ENCODE measurements at regions of chr17 and their contacts with region 1.

Region 1: GRCh38 chr17:75109407-75110233 is at the start of gene ARMC7:
- DNase-seq: peak; percentile 72
- ATAC-seq: peak; percentile 76
- H3K4me3 ChIP-seq: peak within 1 kb of the TSS; percentile 81 to 91
- H3K27ac ChIP-seq: peak within 1 kb of the TSS; percentile 72
- H3K4me1 ChIP-seq: peaks cover 19 to 51% of the 10 kb centered on the region in 2 experiments
- H3K27me3 ChIP-seq: no peaks in the 10 kb centered on the region
- CTCF ChIP-seq: no peak
- POLR2A ChIP-seq: peak; percentile 87
- RAD21 ChIP-seq: peak; percentile 39
- total RNA-seq, gene ARMC7: 43.2 TPM

Region 2: DNA sequence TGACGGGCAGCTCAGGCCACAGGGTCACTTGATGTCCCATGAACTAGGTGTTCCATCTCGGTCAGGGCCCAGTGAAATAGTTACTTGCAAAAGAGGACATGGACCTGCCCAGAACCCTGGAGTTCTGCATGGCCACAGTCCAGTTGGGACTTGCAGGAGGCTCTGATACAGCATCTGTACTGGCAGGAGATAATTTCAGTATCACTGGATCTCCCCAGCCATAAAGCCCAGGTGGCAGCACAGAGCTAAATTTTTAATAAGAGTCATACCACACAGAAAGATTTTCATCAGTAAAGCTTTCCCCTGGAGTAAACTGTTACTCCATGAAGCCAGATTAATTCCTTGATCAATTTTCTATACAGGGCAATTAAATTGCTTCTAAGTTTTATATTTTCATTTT is 39.8 kb before region 1 on chr17:
- CTCF ChIA-PET with region 1: interaction called, 14 read pairs
- POLR2A ChIA-PET with region 1: interaction called, 5 read pairs
- RAD21 ChIA-PET with region 1: interaction called, 3 to 7 read pairs
- intact Hi-C with region 1: loop called (anchors 5 kb)
- DNase-seq: no peak
- ATAC-seq: peak; percentile 76
- H3K4me3 ChIP-seq: no peak overlapping the region
- H3K27ac ChIP-seq: no peak overlapping the region
- H3K4me1 ChIP-seq: peaks cover 14% of the 10 kb centered on the region in 2 experiments
- H3K27me3 ChIP-seq: no peaks in the 10 kb centered on the region
- CTCF ChIP-seq: peak; percentile 55 to 87 (median 57)
- POLR2A ChIP-seq: no peak
- RAD21 ChIP-seq: peak; percentile 90

Region 3: GRCh38 chr17:75124041-75124818 is 14.6 kb after region 1 on chr17:
- CTCF ChIA-PET with region 1: interaction called, 75 read pairs
- POLR2A ChIA-PET with region 1: interaction called, 44 read pairs
- RAD21 ChIA-PET with region 1: interaction called, 6 to 10 read pairs
- intact Hi-C with region 1: no loop called
- DNase-seq: peak; percentile 99
- ATAC-seq: peak; percentile 90
- H3K4me3 ChIP-seq: peak overlapping the region; percentile 44 to 55
- H3K27ac ChIP-seq: peak overlapping the region; percentile 93
- H3K4me1 ChIP-seq: peaks cover 40 to 71% of the 10 kb centered on the region in 2 experiments
- H3K27me3 ChIP-seq: no peaks in the 10 kb centered on the region
- CTCF ChIP-seq: 0 out of 6 replicates have a peak, but pooled peaks of 1 of the 3 experiments have one; percentile 3
- POLR2A ChIP-seq: peak; percentile 77
- RAD21 ChIP-seq: no peak

Region 4: DNA sequence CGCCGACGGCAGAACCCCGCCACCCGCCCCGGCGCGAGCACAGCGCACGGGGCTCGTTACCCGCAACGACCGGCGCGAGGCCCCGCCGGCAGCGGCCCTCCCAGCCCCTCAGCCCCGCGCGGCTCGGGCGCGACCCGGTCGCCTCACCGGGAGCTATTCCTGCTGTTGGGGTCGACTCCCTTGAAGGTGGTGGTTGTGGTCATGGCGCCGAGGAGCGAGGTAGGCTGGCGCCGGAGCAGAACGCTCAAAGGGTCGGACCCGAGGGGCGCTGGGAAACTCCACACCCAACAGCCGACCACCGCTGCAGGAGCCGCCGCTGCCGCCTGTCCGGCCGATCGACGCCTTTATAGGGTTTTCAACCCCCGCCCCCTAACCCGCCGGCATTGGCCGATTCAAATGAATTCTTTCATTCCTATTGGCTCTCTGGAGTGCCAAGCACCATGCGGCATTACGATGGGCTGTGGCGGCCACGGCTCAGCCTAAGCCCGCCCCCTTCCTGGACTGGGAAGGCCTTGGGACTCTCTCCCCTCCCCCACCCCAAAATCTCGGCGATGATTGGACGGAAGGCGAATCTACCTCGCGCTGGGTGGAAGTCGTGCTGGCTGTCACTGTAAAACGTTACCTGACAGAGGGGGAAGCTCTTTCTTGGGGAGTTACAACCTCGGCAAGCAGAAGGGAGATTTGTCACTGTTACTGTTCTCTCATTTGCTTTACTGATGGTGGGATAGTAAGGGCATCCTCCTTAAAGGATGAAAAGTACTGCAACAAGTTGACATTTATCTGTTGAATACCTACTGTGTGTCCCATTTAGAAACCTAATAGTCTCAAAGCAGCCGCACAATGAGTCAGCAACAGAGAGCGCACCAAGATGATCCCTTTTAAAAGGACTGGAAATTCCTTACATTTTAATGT is 44.8 kb after region 1 on chr17 and contains the start of gene JPT1:
- CTCF ChIA-PET with region 1: interaction called, 5 read pairs
- POLR2A ChIA-PET with region 1: interaction called, 10 read pairs
- RAD21 ChIA-PET with region 1: no interaction called
- intact Hi-C with region 1: no loop called
- DNase-seq: peak; percentile 100
- ATAC-seq: peak; percentile 94
- H3K4me3 ChIP-seq: peak within 1 kb of the TSS; percentile 88 to 96
- H3K27ac ChIP-seq: peak within 1 kb of the TSS; percentile 94
- H3K4me1 ChIP-seq: peaks cover 61 to 64% of the 10 kb centered on the region in 2 experiments
- H3K27me3 ChIP-seq: no peaks in the 10 kb centered on the region
- CTCF ChIP-seq: no peak
- POLR2A ChIP-seq: peak; percentile 100
- RAD21 ChIP-seq: no peak
- total RNA-seq, gene JPT1: 575 TPM

Region 5: GRCh38 chr17:75199886-75200618 is 90.4 kb after region 1 on chr17:
- CTCF ChIA-PET with region 1: interaction called, 104 read pairs
- POLR2A ChIA-PET with region 1: interaction called, 8 read pairs
- RAD21 ChIA-PET with region 1: interaction called, 6 to 22 read pairs
- intact Hi-C with region 1: loop called (anchors 1 kb)
- DNase-seq: no peak
- ATAC-seq: no peak
- H3K4me3 ChIP-seq: no peak overlapping the region
- H3K27ac ChIP-seq: peak overlapping the region; percentile 62
- H3K4me1 ChIP-seq: peaks cover 20 to 37% of the 10 kb centered on the region in 2 experiments
- H3K27me3 ChIP-seq: no peaks in the 10 kb centered on the region
- CTCF ChIP-seq: no peak
- POLR2A ChIP-seq: no peak
- RAD21 ChIP-seq: no peak

Region 6: DNA sequence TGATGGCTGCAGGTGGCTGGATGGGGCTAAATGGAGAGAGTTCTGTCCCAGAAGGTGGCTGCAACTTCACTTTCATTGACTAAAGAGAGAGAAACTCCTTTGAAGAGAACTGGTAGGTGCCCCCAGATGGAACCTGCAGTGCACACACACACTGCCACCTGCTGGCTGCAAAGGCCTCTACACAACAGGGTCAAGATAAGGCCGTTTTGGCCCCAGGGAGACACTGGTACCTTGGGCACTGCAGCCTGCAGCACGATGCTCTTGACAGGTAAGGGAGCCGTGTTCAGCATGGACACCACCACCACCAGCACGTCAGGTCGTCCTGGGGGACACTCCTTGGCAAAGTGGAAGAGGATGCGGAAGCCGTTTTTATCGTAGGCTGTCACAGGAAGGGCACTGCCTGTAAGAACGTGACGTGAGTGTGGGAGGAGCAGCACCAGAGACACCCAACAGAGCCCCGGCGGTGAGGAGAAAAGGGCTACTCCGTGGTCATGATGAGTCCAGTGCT is 129.1 kb after region 1 on chr17:
- CTCF ChIA-PET with region 1: interaction called, 30 read pairs
- POLR2A ChIA-PET with region 1: interaction called, 6 read pairs
- RAD21 ChIA-PET with region 1: no interaction called
- intact Hi-C with region 1: loop called (anchors 1 kb)
- DNase-seq: peak; percentile 59
- ATAC-seq: peak; percentile 79
- H3K4me3 ChIP-seq: no peak overlapping the region
- H3K27ac ChIP-seq: no peak overlapping the region; the same call in 1 of the 2 replicates
- H3K4me1 ChIP-seq: peaks cover 0 to 11% of the 10 kb centered on the region in 2 experiments; a peak in 1 of 4 replicates
- H3K27me3 ChIP-seq: no peaks in the 10 kb centered on the region
- CTCF ChIP-seq: peak; percentile 77 to 99 (median 99)
- POLR2A ChIP-seq: no peak
- RAD21 ChIP-seq: peak; percentile 68

Region 7: GRCh38 chr17:75412455-75413317 is 303.1 kb after region 1 on chr17:
- CTCF ChIA-PET with region 1: interaction called, 9 read pairs
- POLR2A ChIA-PET with region 1: no interaction called
- RAD21 ChIA-PET with region 1: interaction called in 1 of 2 experiments, 3 read pairs
- intact Hi-C with region 1: loop called (anchors 2 kb)
- DNase-seq: peak; percentile 75
- ATAC-seq: peak; percentile 93
- H3K4me3 ChIP-seq: peak overlapping the region; percentile 12 to 17; a peak in 2 of 4 replicates
- H3K27ac ChIP-seq: no peak overlapping the region
- H3K4me1 ChIP-seq: peaks cover 0 to 11% of the 10 kb centered on the region in 2 experiments; a peak in 2 of 4 replicates
- H3K27me3 ChIP-seq: peaks cover 5% of the 10 kb centered on the region; the same call in 1 of the 2 replicates
- CTCF ChIP-seq: peak; percentile 91 to 96 (median 91)
- POLR2A ChIP-seq: no peak
- RAD21 ChIP-seq: peak; percentile 99